ENCODE measurements at regions of chr9 and their contacts with region 1.

Region 1: DNA sequence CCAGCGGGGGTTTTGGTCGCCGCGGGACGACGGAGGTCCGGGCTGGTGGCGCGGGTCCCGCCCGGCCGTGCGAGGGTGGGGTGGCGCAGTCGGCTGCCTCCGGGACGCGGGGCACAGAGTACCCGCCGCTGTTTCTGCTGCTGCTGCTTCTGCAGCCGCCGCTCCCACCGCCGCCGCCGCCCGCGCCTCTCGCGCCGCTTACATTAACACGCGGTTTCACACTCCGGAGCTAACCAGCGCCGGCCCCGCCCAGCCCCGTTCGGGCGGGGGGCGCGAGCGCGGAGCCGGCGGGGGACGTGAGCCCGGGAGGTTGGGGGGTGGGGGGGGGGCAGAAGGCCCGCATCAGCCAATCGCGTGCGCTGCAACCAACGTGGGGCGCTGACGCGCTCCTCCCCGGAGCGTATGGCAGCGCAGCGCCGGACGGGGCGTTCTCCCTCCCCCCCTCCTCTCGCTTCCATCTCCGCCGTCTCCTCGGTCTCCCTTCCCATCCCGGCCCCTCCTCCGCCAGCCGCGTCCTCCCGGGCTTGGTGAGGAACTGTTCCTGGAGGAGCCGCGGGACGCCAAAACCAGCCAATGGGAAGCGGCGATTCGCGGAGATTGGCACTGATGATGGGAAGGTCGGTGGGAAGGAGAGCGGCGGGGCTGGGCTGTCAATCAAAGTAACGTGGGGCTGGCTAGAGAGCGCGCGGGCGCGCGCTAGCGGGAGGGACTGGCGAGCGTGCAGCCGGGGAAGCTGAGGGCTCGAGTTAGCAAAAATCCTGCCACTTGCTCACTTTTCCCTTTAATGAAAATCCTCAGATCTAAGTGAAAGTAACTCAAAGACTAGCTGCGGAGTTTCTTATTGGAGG is at the start of gene TLE1:
- DNase-seq: peak; percentile 87
- ATAC-seq: peak; percentile 88
- H3K4me3 Mint-ChIP-seq: peak within 1 kb of the TSS; percentile 76
- H3K27ac Mint-ChIP-seq: peak within 1 kb of the TSS; percentile 74
- H3K4me1 Mint-ChIP-seq: peaks cover 12% of the 10 kb centered on the region
- H3K27me3 Mint-ChIP-seq: peaks cover 25% of the 10 kb centered on the region
- total RNA-seq, gene TLE1: 0.07 to 0.23 TPM

Region 2: GRCh38 chr9:81069923-81070322 is 619.6 kb before region 1 on chr9:
- CTCF ChIA-PET with region 1: no interaction called
- POLR2A ChIA-PET with region 1: no interaction called
- intact Hi-C with region 1: no loop called
- DNase-seq: no peak
- ATAC-seq: no peak
- H3K4me3 Mint-ChIP-seq: no peak overlapping the region
- H3K27ac Mint-ChIP-seq: no peak overlapping the region
- H3K4me1 Mint-ChIP-seq: no peaks in the 10 kb centered on the region
- H3K27me3 Mint-ChIP-seq: no peaks in the 10 kb centered on the region

Region 3: GRCh38 chr9:81125446-81126092 is 564.0 kb before region 1 on chr9:
- CTCF ChIA-PET with region 1: no interaction called
- POLR2A ChIA-PET with region 1: no interaction called
- intact Hi-C with region 1: loop called in 1 of 2 experiments (anchors 5 kb)
- DNase-seq: no peak
- ATAC-seq: peak; percentile 36
- H3K4me3 Mint-ChIP-seq: no peak overlapping the region
- H3K27ac Mint-ChIP-seq: no peak overlapping the region
- H3K4me1 Mint-ChIP-seq: peaks cover 6% of the 10 kb centered on the region
- H3K27me3 Mint-ChIP-seq: no peaks in the 10 kb centered on the region

Region 4: GRCh38 chr9:81521892-81522291 is 167.7 kb before region 1 on chr9:
- CTCF ChIA-PET with region 1: no interaction called
- POLR2A ChIA-PET with region 1: no interaction called
- intact Hi-C with region 1: loop called in 1 of 2 experiments (anchors 5 kb)
- DNase-seq: no peak
- ATAC-seq: no peak
- H3K4me3 Mint-ChIP-seq: no peak overlapping the region
- H3K27ac Mint-ChIP-seq: no peak overlapping the region
- H3K4me1 Mint-ChIP-seq: no peaks in the 10 kb centered on the region
- H3K27me3 Mint-ChIP-seq: peaks cover 5% of the 10 kb centered on the region

Region 5: GRCh38 chr9:81759668-81760215 is 70.2 kb after region 1 on chr9:
- CTCF ChIA-PET with region 1: no interaction called
- POLR2A ChIA-PET with region 1: no interaction called
- intact Hi-C with region 1: no loop called
- DNase-seq: no peak
- ATAC-seq: no peak
- H3K4me3 Mint-ChIP-seq: no peak overlapping the region
- H3K27ac Mint-ChIP-seq: no peak overlapping the region
- H3K4me1 Mint-ChIP-seq: no peaks in the 10 kb centered on the region
- H3K27me3 Mint-ChIP-seq: no peaks in the 10 kb centered on the region

Region 6: DNA sequence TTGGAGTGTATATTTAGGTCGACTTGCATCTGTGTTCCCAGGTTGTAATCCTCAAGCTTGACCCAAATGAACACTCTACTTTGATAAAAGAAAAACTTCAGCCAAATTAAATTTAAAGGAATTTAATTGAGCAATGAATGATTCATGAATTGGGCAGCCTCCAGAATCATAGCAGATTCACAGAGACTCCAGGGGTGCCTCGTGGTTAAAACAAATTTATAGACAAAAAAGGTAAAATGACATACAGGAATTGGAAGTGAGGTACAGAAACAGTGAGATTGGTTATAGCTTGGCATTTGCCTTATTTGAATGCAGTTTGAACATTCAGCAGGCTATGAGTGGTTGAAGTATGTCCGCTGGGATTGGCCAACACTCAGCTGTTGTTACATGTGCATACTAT is 217.1 kb after region 1 on chr9:
- CTCF ChIA-PET with region 1: no interaction called
- POLR2A ChIA-PET with region 1: no interaction called
- intact Hi-C with region 1: no loop called
- DNase-seq: no peak
- ATAC-seq: no peak
- H3K4me3 Mint-ChIP-seq: no peak overlapping the region
- H3K27ac Mint-ChIP-seq: no peak overlapping the region
- H3K4me1 Mint-ChIP-seq: no peaks in the 10 kb centered on the region
- H3K27me3 Mint-ChIP-seq: no peaks in the 10 kb centered on the region

Region 7: GRCh38 chr9:82443312-82443711 is 753.7 kb after region 1 on chr9:
- CTCF ChIA-PET with region 1: no interaction called
- POLR2A ChIA-PET with region 1: no interaction called
- intact Hi-C with region 1: loop called in 1 of 2 experiments (anchors 10 kb)
- DNase-seq: no peak
- ATAC-seq: no peak
- H3K4me3 Mint-ChIP-seq: no peak overlapping the region
- H3K27ac Mint-ChIP-seq: no peak overlapping the region
- H3K4me1 Mint-ChIP-seq: no peaks in the 10 kb centered on the region
- H3K27me3 Mint-ChIP-seq: no peaks in the 10 kb centered on the region